ENCODE measurements at regions of chr11 and their contacts with region 1.

Region 1: DNA sequence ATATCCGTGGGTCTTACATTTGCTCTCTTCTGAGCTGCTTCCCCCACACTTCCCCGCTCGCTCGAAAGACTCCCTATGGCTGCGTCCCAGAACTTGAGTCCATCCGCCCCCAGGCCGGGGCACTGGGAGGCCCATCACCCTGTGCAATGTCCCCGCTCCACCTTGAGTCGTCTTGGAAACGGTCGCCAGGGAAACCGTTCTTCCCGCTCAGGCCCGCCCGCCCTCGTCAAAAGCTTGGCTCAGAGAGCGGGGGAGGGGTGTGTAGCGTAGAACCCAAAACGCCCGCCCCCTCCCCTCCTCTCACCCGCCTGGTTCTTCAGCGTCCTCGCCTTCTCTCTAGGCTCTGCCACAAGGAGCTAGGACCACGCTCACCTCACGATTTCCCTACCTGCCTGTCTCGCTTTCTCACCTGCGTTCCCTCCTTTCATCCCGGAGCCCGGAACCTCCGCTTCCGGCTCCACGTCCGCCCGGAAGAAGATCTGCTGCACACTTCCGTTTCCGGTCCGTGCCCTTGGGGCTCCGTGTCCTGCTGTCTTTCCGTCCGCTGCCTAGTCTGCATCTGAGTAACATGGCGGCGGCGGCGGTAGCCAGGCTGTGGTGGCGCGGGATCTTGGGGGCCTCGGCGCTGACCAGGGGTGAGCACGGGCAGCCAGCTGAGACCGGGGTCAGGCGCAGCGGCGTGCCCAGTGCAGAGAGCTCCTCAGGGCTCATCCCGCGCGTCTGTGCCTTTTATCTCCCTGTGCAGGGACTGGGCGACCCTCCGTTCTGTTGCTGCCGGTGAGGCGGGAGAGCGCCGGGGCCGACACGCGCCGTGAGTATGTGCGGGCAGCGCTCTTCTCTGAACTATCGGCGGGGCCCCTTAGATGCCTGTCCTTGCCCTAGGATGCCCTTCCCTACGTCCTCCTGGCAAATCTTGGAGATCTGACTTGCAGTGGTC is at the starts of genes KBTBD4 and NDUFS3:
- DNase-seq: peak; percentile 71
- ATAC-seq: peak; percentile 96
- H3K4me3 ChIP-seq: peak within 1 kb of the TSS; percentile 90
- H3K27ac ChIP-seq: peak within 1 kb of the TSS; percentile 70
- H3K4me1 ChIP-seq: peaks cover 12% of the 10 kb centered on the region
- H3K27me3 ChIP-seq: no peaks in the 10 kb centered on the region
- CTCF ChIP-seq: no peak
- EP300 ChIP-seq: peak in 1 of 2 experiments; percentile 53; a peak in 1 of 4 replicates
- POLR2A ChIP-seq: peak; percentile 98
- RAD21 ChIP-seq: peak; percentile 19; the same call in 1 of the 2 replicates
- polyA plus RNA-seq, gene KBTBD4: 25.4 to 46.4 TPM
- polyA plus RNA-seq, gene NDUFS3: 22.3 to 101 TPM

Region 2: DNA sequence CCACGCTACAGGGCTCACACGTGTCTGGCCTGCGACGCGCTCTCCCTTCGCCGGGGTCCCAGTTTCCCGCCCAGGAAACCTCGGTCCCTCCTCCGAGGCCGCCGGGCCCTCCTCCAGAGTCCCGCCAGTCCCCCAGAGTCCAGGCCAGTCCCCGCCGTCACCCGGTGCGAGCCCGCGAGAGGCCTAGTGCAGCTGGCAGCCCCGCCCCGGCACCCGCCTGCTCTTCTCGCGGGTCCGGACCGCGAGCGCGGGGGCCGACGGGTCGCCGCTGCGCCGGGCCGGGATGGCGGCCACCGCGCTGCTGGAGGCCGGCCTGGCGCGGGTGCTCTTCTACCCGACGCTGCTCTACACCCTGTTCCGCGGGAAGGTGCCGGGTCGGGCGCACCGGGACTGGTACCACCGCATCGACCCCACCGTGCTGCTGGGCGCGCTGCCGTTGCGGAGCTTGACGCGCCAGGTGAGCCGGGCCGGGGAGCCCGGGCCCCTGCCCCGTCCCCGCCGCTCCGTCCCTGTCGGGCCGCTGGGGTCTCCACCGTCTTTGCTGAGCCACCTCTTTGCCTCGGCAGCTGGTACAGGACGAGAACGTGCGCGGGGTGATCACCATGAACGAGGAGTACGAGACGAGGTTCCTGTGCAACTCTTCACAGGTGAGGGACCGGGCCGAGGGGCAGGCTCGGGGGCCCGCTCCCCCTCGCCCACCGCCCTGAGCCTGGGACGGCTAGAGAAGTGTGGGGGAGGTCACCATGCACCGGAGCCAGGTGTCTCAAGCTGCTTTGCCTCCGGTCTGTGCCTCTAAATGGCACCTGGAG is 13.2 kb before region 1 on chr11 and contains the start of gene PTPMT1:
- CTCF ChIA-PET with region 1: interaction called, 4 read pairs
- POLR2A ChIA-PET with region 1: interaction called, 16 read pairs
- RAD21 ChIA-PET with region 1: interaction called, 4 read pairs
- SMC1A ChIA-PET with region 1: interaction called, 9 read pairs
- in situ Hi-C with region 1: no loop called
- intact Hi-C with region 1: no loop called
- DNase-seq: no peak
- ATAC-seq: peak; percentile 97
- H3K4me3 ChIP-seq: peak within 1 kb of the TSS; percentile 94
- H3K27ac ChIP-seq: peak within 1 kb of the TSS; percentile 58
- H3K4me1 ChIP-seq: no peaks in the 10 kb centered on the region; the same call in 1 of the 2 replicates
- H3K27me3 ChIP-seq: no peaks in the 10 kb centered on the region
- CTCF ChIP-seq: no peak
- EP300 ChIP-seq: no peak
- POLR2A ChIP-seq: peak; percentile 95
- RAD21 ChIP-seq: no peak
- polyA plus RNA-seq, gene PTPMT1: 12.0 to 26.1 TPM

Region 3: DNA sequence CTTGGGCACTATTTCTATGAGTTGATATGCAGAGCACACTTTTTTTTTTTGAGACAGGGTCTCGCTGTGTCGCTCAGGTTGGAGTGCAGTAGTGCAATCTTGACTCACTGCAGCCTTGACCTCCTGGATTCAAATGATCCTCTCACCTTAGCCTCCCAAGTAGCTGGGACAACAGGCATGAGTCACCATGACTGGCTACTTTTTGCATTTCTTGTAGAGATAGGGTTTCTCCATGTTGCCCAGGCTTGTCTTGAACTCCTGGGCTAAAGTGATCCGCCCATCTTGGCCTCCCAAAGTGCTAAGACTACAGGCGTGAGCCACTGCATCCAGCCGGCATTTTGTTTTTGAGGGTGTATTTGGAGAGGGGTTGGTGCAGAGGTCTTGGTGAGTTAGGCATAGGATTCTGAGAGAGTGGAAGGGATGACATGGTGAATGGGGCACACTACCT is 93.5 kb after region 1 on chr11:
- CTCF ChIA-PET with region 1: no interaction called
- POLR2A ChIA-PET with region 1: no interaction called
- RAD21 ChIA-PET with region 1: no interaction called
- SMC1A ChIA-PET with region 1: no interaction called
- in situ Hi-C with region 1: no loop called
- intact Hi-C with region 1: no loop called
- DNase-seq: no peak
- ATAC-seq: no peak
- H3K4me3 ChIP-seq: no peak overlapping the region
- H3K27ac ChIP-seq: no peak overlapping the region
- H3K4me1 ChIP-seq: no peaks in the 10 kb centered on the region
- H3K27me3 ChIP-seq: no peaks in the 10 kb centered on the region
- CTCF ChIP-seq: no peak
- EP300 ChIP-seq: no peak
- POLR2A ChIP-seq: no peak
- RAD21 ChIP-seq: no peak